ENCODE measurements at regions of chr7 and their contacts with region 1.

Region 1: DNA sequence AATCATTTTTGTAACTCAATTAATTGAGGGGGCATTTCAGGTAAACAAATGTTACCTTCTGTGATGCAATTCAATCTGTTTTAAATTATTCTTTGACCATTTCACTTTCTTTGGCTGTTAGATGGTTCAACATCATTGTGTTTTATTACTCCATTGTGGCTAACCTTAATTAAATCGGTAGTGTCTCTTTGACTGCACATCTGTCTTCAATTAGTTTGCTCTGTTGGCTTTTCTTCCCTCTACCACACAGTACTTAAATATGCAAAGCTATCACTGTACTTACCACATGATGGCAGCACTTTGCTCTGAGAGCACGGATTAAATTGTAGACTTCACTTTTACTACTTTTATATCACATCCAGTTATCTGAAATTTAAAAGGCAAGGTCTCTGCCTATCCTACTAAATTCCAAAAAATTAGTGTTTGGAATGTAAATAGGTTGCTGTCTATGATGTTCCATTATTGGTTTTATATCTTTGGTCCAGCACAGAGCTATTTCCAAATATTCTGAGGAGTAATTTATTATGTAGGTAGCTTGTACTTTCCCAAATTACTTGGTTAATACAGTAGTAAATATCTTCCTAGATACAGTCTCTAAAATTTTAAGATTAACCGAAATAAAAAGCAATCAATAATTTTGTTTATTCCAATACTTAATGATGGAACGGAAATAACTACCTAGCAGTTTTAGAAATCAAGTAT is 352.0 kb downstream of the PCLO start:
- DNase-seq: peak; percentile 2
- H3K4me3 Mint-ChIP-seq: no peak overlapping the region
- H3K27ac Mint-ChIP-seq: no peak overlapping the region
- H3K4me1 Mint-ChIP-seq: no peaks in the 10 kb centered on the region
- H3K27me3 Mint-ChIP-seq: no peaks in the 10 kb centered on the region
- CTCF ChIP-seq: peak; percentile 24

Region 2: DNA sequence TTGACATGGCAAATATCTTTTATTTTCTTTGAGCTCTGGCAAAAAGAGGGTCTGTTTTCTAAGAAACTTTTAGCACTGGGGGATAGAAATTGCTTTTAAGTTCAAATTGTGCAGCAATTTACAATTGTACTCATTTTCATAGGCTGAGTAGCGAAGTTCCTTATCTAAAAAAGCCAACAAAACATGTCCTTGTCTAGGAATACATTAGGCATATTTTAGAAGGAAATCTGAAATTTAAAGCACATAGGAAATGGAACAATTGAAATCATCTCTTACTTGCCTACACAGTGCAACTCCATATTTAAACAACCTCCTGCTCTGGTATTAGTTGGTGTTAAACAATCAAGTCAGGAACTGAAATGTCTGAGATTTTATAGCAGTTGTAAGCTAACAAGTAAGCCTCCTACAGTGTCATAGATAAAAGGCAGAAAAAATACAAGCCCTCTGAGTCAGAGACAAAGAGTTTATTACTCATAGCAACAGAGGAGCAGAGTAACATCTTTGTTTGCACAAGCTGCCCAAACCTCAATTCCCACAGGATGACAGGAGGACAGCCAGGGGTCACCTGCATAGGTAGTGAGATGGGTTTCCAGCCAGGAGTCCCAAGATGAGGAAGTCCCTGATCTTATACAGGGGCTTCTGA is 760.7 kb before region 1 on chr7:
- CTCF ChIA-PET with region 1: no interaction called
- intact Hi-C with region 1: no loop called
- DNase-seq: peak; percentile 13
- H3K4me3 Mint-ChIP-seq: no peak overlapping the region
- H3K27ac Mint-ChIP-seq: no peak overlapping the region
- H3K4me1 Mint-ChIP-seq: no peaks in the 10 kb centered on the region
- H3K27me3 Mint-ChIP-seq: no peaks in the 10 kb centered on the region
- CTCF ChIP-seq: no peak

Region 3: DNA sequence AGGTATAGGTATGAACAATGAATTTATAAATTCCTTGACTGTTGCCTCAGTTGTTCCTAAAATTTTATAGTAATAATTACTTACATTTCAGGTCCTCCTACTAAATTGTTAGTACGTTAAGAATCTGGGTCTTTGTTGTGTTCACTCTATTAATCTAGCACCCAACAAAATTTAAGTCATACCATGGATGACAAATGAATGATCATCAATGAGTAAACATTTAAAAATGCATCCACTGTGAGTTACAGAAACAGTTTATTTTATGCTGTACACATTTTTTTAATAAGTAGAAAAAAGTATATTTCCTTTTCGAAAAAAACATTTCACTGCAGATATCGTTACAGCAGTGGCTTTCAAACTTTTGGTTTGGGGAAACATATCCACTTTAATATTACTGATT is 86.8 kb after region 1 on chr7:
- CTCF ChIA-PET with region 1: no interaction called
- intact Hi-C with region 1: no loop called
- DNase-seq: no peak
- H3K4me3 Mint-ChIP-seq: no peak overlapping the region
- H3K27ac Mint-ChIP-seq: no peak overlapping the region
- H3K4me1 Mint-ChIP-seq: no peaks in the 10 kb centered on the region
- H3K27me3 Mint-ChIP-seq: no peaks in the 10 kb centered on the region
- CTCF ChIP-seq: no peak

Region 4: DNA sequence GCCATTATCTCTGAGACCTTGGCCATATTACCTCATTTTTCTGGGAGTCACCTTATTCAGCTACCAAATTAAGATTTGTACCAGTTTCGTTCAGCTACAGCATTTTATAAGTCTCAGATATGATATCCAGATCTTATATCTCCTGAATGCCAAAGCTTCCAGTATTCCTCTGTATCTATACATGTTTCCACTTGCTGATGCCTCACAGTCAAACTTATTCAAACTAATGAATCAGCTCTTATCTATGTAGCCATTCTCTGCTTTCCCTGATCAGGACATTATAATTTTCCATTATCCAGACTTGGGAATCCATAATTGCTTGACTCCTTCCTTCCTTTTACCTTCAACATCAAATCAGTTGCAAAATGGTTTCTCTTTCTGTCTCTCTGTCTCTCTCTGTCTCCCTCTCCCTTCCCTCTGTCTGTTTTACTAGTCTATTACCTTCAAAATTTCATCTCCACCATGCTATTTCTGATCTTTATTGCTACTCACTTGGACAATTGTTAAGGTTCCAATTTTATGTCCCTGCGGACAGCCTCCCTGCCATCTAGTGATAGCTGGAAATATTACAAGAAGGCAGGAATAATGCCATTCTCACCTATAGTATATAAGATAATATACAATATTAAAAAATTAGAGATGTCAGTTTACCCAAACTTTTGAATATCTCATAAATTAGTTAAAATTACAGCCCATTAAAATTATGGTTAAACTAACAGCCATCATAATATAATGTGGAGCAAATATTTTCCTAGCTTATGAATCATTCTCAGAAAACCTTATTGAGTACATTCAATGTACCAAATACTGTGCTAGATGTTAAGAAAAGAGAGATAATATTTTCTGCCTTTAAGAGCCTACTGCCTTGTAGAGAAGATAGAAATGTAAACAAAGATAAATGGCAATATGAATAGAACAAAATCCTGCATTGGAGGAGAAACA is 262.1 kb after region 1 on chr7:
- CTCF ChIA-PET with region 1: interaction called, 6 read pairs
- intact Hi-C with region 1: loop called (anchors 1 kb)
- DNase-seq: no peak
- H3K4me3 Mint-ChIP-seq: no peak overlapping the region
- H3K27ac Mint-ChIP-seq: no peak overlapping the region
- H3K4me1 Mint-ChIP-seq: no peaks in the 10 kb centered on the region
- H3K27me3 Mint-ChIP-seq: no peaks in the 10 kb centered on the region
- CTCF ChIP-seq: no peak

Region 5: GRCh38 chr7:83162402-83163256 is 351.9 kb after region 1 on chr7 and contains the start of gene PCLO:
- CTCF ChIA-PET with region 1: no interaction called
- intact Hi-C with region 1: loop called (anchors 10 kb)
- DNase-seq: peak; percentile 92
- H3K4me3 Mint-ChIP-seq: peak within 1 kb of the TSS; percentile 85
- H3K27ac Mint-ChIP-seq: peak within 1 kb of the TSS; percentile 50
- H3K4me1 Mint-ChIP-seq: no peaks in the 10 kb centered on the region
- H3K27me3 Mint-ChIP-seq: no peaks in the 10 kb centered on the region
- CTCF ChIP-seq: no peak
- total RNA-seq, gene PCLO: 7.2 and 9.1 TPM in 2 replicates

Region 6: GRCh38 chr7:83271212-83272099 is 460.7 kb after region 1 on chr7:
- CTCF ChIA-PET with region 1: no interaction called
- intact Hi-C with region 1: loop called (anchors 2 kb)
- DNase-seq: no peak
- H3K4me3 Mint-ChIP-seq: no peak overlapping the region
- H3K27ac Mint-ChIP-seq: no peak overlapping the region
- H3K4me1 Mint-ChIP-seq: peaks cover 18% of the 10 kb centered on the region
- H3K27me3 Mint-ChIP-seq: no peaks in the 10 kb centered on the region
- CTCF ChIP-seq: no peak